GM10248 (cell line): ENCODE measurements at regions of chr1 and their contacts with region 1.

Region 1: DNA sequence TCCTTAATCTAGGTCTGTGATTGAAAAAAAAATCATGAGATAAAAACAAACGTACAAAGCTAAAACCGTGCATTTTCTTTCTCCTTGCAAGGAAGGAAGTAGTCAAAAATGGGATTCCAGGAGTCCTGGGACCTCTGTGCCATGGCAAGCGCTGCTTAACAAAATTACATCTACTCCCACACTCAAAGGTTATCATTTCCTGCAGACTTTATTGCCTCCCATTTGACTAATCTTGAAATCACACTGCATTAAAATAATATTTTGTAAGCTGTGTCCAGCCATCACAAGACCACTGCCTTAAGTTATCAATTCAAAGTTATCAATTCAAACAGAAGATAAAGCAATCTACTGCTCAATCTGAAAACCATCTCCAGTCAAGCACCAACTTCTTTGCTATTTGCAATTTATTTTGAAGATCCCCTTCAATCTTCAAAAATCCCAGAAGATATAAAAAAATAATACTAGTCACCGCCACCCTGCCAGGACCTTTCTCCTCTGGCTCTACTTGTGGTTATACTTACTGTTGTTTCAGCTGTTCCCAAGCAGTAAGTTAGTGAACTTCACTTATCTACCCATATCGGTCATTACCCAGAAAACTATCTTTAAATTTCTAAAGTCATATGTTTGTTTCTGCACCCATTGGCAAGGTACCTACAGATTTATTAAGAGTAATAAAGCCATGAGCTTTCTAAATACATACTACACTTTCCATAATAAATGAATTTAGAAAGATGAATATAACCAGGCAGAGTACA is 38.1 kb upstream of the RAP1GAP start:
- DNase-seq: no peak
- CTCF ChIP-seq: no peak

Region 2: GRCh38 chr1:21742578-21742977 is 35.3 kb after region 1 on chr1:
- CTCF ChIA-PET with region 1: interaction called, 3 read pairs
- POLR2A ChIA-PET with region 1: interaction called, 13 read pairs
- DNase-seq: no peak
- CTCF ChIP-seq: no peak

Region 3: GRCh38 chr1:21773585-21773984 is 66.3 kb after region 1 on chr1:
- CTCF ChIA-PET with region 1: no interaction called
- POLR2A ChIA-PET with region 1: no interaction called
- DNase-seq: no peak
- CTCF ChIP-seq: no peak

Region 4: GRCh38 chr1:22773981-22774832 is 1066.9 kb after region 1 on chr1:
- CTCF ChIA-PET with region 1: no interaction called
- POLR2A ChIA-PET with region 1: no interaction called
- DNase-seq: no peak
- CTCF ChIP-seq: no peak